Transverse colon (tissue), 4 donors: ENCODE measurements at regions of chr13 and their contacts with region 1.

Region 1: DNA sequence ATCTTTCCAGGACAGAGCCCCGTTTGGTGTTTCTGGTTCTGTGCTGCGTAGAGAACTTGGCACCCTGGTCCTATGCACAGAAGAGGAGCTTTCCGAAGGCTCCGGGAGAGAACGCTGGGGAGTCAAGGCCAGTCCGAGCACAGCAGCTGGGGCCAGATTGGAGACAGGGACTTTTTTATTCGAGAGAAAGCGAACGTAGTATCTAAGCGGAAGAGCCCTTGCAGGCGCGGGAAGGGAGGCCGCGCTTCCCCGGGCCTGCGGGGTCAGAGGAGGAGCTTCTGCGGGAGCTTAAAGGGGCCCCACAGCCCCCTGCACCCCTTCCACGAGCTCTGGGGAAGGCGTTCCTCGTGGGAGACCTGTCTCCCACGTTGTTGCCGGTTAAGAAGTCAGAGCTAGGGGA is 48.6 kb upstream of the ARHGEF7 start:
- DNase-seq: no peak
- H3K4me3 ChIP-seq: peak overlapping the region in 2 of 4 donors; percentile 51 to 58
- H3K27ac ChIP-seq: peak overlapping the region in 2 of 4 donors; percentile 6 to 43
- H3K4me1 ChIP-seq: peaks cover 0 to 10% (median 4%) of the 10 kb centered on the region in 4 donors
- H3K27me3 ChIP-seq: peaks cover 22% of the 10 kb centered on the region
- CTCF ChIP-seq: no peak
- EP300 ChIP-seq: no peak
- POLR2A ChIP-seq: no peak

Region 2: GRCh38 chr13:111216166-111216960 is 149.8 kb after region 1 on chr13:
- in situ Hi-C with region 1: loop called in 3 of 4 experiments (anchors 10 kb)
- intact Hi-C with region 1: loop called (anchors 5 kb)
- DNase-seq: peak; percentile 38
- H3K4me3 ChIP-seq: no peak overlapping the region
- H3K27ac ChIP-seq: no peak overlapping the region
- H3K4me1 ChIP-seq: peaks cover 0 to 29% (median 4%) of the 10 kb centered on the region in 4 donors
- H3K27me3 ChIP-seq: no peaks in the 10 kb centered on the region
- CTCF ChIP-seq: peak in 4 of 5 experiments; percentile 28 to 36 (median 33)
- EP300 ChIP-seq: no peak
- POLR2A ChIP-seq: no peak